MCF 10A (cell line): ENCODE measurements at regions of chr6 and their contacts with region 1.

Region 1: GRCh38 chr6:25962149-25963127 is at the start of gene TRIM38:
- DNase-seq: peak; percentile 90
- H3K4me3 Mint-ChIP-seq: peak within 1 kb of the TSS; percentile 83
- H3K27ac Mint-ChIP-seq: peak within 1 kb of the TSS; percentile 98
- H3K4me1 Mint-ChIP-seq: peaks cover 47% of the 10 kb centered on the region
- H3K27me3 Mint-ChIP-seq: no peaks in the 10 kb centered on the region
- CTCF ChIP-seq: no peak
- total RNA-seq, gene TRIM38: 5.4 and 6.7 TPM in 2 replicates

Region 2: GRCh38 chr6:26017632-26017966 is 55.2 kb after region 1 on chr6:
- CTCF ChIA-PET with region 1: interaction called, 4 read pairs
- POLR2A ChIA-PET with region 1: interaction called, 13 read pairs
- intact Hi-C with region 1: no loop called
- DNase-seq: peak; percentile 93
- H3K4me3 Mint-ChIP-seq: peak overlapping the region; percentile 75
- H3K27ac Mint-ChIP-seq: peak overlapping the region; percentile 73
- H3K4me1 Mint-ChIP-seq: no peaks in the 10 kb centered on the region
- H3K27me3 Mint-ChIP-seq: no peaks in the 10 kb centered on the region
- CTCF ChIP-seq: peak; percentile 26

Region 3: DNA sequence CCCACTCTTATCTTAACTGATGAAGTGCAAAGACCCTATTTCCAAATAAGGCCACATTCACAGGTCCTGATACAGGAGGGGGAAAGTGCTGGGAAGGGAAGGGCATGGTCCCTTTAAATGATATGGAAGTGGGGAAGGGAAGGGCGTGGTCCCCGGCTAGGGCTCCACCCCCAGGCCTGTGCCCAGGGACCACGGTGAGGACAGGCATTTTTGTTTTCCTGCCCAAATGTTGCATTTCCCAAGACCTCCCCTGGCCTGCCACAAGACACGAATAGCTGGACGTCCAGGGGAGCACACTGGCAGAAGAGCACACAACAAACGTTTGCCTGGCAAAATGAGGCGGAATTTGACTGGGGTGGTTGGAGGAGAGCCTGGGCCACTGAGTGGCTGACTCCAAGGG is 108.7 kb after region 1 on chr6:
- CTCF ChIA-PET with region 1: no interaction called
- POLR2A ChIA-PET with region 1: no interaction called
- intact Hi-C with region 1: no loop called
- DNase-seq: peak; percentile 45
- H3K4me3 Mint-ChIP-seq: no peak overlapping the region
- H3K27ac Mint-ChIP-seq: no peak overlapping the region
- H3K4me1 Mint-ChIP-seq: no peaks in the 10 kb centered on the region
- H3K27me3 Mint-ChIP-seq: no peaks in the 10 kb centered on the region
- CTCF ChIP-seq: no peak